Activated CD4-positive, alpha-beta T cell treated with anti-CD3 and anti-CD28 coated beads for 36 hours (primary cell): ENCODE measurements at regions of chr1 and their contacts with region 1.

Region 1: DNA sequence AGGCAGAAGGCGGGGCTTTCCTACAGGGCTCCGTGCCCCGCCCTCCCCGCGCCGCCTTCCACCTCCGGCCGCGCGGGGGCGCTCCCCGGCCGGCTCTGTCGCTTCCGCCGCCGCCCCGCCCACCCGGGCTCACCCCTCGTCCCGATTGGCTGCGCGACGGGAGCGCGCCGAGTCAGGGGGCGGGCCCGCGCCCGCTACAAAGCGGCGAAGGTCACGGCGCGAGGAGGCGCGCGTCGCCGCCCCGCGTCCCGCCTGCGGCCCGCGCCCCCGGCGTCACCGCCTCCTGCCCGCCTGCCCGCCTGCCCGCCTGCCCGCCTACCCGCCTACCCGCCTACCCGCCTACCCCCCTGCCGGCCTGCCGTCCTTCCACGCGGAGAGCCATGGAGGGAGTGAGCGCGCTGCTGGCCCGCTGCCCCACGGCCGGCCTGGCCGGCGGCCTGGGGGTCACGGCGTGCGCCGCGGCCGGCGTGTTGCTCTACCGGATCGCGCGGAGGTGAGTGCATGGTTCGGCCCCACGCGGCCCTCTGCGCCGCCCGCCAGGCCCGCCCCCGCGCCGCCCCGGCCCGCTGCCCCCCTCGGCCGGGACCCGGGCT is at the start of gene TMEM201:
- DNase-seq: peak; percentile 97
- ATAC-seq: peak; percentile 92
- H3K4me3 Mint-ChIP-seq: peak within 1 kb of the TSS; percentile 80
- H3K27ac Mint-ChIP-seq: peak within 1 kb of the TSS; percentile 79
- H3K4me1 Mint-ChIP-seq: peaks cover 26% of the 10 kb centered on the region
- H3K27me3 Mint-ChIP-seq: no peaks in the 10 kb centered on the region
- total RNA-seq, gene TMEM201: 14.6 to 15.1 TPM

Region 2: GRCh38 chr1:8540261-8540941 is 1048.2 kb before region 1 on chr1:
- CTCF ChIA-PET with region 1: no interaction called
- POLR2A ChIA-PET with region 1: no interaction called
- intact Hi-C with region 1: no loop called
- DNase-seq: no peak
- ATAC-seq: peak; percentile 84
- H3K4me3 Mint-ChIP-seq: no peak overlapping the region
- H3K27ac Mint-ChIP-seq: peak overlapping the region; percentile 80
- H3K4me1 Mint-ChIP-seq: peaks cover 32% of the 10 kb centered on the region
- H3K27me3 Mint-ChIP-seq: no peaks in the 10 kb centered on the region

Region 3: DNA sequence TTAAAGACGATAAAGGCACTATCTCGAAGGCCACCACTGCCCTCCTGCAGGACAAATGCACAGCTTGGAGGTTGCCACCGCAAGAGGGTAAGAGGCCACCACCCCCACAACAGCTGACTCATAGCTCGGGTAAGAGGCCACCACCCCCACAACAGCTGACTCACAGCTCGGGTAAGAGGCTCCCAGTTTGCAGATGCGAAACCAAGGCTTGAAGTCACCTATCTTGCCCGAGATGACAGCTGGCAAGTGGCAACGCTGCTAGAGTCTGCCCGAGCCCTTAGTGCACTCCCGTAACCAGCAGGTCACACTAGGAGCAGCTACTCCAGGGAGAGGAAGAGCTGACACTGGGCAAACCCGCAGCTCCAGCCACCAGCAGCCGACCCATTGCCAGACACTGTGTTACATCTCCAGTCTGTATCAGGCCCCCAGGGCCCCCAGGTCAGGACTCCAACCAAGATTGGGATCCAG is 313.0 kb before region 1 on chr1:
- CTCF ChIA-PET with region 1: no interaction called
- POLR2A ChIA-PET with region 1: no interaction called
- intact Hi-C with region 1: loop called in 1 of 2 experiments (anchors 5 kb)
- DNase-seq: peak; percentile 93
- ATAC-seq: peak; percentile 89
- H3K4me3 Mint-ChIP-seq: peak overlapping the region; percentile 2
- H3K27ac Mint-ChIP-seq: peak overlapping the region; percentile 47
- H3K4me1 Mint-ChIP-seq: peaks cover 33% of the 10 kb centered on the region
- H3K27me3 Mint-ChIP-seq: no peaks in the 10 kb centered on the region

Region 4: DNA sequence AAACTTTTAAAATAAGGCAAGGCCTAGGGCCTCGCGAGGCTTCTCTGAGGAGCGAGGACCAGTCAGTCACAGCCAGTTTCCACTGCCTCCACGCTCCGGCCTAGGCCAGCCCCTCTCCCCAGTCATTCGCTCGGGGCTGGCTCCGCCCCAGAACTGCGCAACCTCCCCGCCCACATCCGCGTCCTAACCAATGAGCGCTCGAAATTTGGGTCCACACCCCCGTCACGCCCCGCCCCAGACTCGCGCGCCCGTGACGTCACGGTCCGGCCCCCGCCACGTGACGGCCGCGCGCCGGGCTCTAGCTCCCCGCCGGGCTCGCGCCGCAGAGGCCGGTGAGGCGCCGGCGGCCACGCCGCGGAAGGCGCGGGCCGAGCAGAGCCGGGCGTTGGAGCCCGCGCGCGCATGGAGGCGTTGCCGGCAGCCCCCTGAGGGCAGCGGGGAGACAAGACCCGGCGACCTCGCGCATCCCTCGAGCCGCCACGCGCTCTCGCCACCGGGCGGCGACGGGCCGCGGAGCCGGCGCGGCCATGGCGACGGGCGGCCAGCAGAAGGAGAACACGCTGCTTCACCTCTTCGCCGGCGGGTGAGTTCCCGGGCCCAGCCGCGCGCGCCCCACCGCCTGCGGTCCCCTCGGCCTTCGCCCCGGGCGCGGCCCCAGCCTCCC is 49.4 kb before region 1 on chr1 and contains the start of gene SLC25A33:
- CTCF ChIA-PET with region 1: no interaction called
- POLR2A ChIA-PET with region 1: interaction called, 3 read pairs
- intact Hi-C with region 1: loop called (anchors 1 to 5 kb)
- DNase-seq: peak; percentile 99
- ATAC-seq: peak; percentile 99
- H3K4me3 Mint-ChIP-seq: peak within 1 kb of the TSS; percentile 80
- H3K27ac Mint-ChIP-seq: peak within 1 kb of the TSS; percentile 78
- H3K4me1 Mint-ChIP-seq: peaks cover 30% of the 10 kb centered on the region
- H3K27me3 Mint-ChIP-seq: no peaks in the 10 kb centered on the region
- total RNA-seq, gene SLC25A33: 4.4 to 6.1 TPM

Region 5: GRCh38 chr1:9629445-9630201 is 41.0 kb after region 1 on chr1:
- CTCF ChIA-PET with region 1: interaction called, 4 read pairs
- POLR2A ChIA-PET with region 1: interaction called, 6 read pairs
- intact Hi-C with region 1: loop called in 1 of 2 experiments (anchors 1 kb)
- DNase-seq: peak; percentile 88
- ATAC-seq: peak; percentile 45
- H3K4me3 Mint-ChIP-seq: peak overlapping the region; percentile 87
- H3K27ac Mint-ChIP-seq: peak overlapping the region; percentile 95
- H3K4me1 Mint-ChIP-seq: peaks cover 64% of the 10 kb centered on the region
- H3K27me3 Mint-ChIP-seq: peaks cover 2% of the 10 kb centered on the region

Region 6: GRCh38 chr1:9710037-9710436 is 121.4 kb after region 1 on chr1:
- CTCF ChIA-PET with region 1: no interaction called
- POLR2A ChIA-PET with region 1: no interaction called
- intact Hi-C with region 1: no loop called
- DNase-seq: no peak
- ATAC-seq: no peak
- H3K4me3 Mint-ChIP-seq: no peak overlapping the region
- H3K27ac Mint-ChIP-seq: no peak overlapping the region
- H3K4me1 Mint-ChIP-seq: peaks cover 36% of the 10 kb centered on the region
- H3K27me3 Mint-ChIP-seq: no peaks in the 10 kb centered on the region

Region 7: DNA sequence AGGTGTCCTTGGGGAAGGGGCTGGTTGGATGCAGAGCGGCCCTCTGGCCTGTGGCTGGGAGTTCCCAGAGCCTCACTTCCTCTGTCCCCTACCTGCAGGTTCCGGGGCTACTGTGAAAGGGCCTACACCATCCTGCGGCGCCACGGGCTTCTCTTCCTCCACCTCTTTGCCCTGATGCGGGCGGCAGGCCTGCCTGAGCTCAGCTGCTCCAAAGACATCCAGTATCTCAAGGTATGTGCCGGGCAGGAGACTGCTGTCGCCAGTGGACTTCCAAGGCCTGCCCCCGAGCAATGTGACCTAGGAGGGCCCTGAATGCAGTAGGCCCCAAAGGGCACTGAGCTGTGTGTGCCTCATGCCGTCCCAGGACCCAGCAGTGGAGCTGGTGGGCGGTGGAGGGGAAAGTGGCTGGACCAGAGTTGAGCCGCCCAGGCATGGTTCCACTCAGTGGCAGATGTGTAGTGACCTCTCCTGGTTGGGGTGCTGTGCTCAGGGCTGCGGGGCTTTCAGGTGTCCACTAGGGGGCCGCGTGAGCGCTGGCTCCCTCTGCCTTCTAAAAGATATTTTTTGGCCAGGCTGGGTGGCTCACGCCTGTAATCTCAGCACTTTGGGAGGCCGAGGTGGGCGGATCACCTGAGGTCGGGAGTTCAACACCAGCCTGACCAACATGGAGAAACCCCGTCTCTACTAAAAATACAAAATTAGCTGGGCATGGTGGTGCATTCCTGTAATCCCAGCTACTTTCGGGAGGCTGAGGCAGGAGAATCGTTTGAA is 136.2 kb after region 1 on chr1:
- CTCF ChIA-PET with region 1: no interaction called
- POLR2A ChIA-PET with region 1: no interaction called
- intact Hi-C with region 1: loop called in 1 of 2 experiments (anchors 1 kb)
- DNase-seq: peak; percentile 84
- ATAC-seq: peak; percentile 24
- H3K4me3 Mint-ChIP-seq: no peak overlapping the region
- H3K27ac Mint-ChIP-seq: no peak overlapping the region
- H3K4me1 Mint-ChIP-seq: peaks cover 61% of the 10 kb centered on the region
- H3K27me3 Mint-ChIP-seq: no peaks in the 10 kb centered on the region

Region 8: DNA sequence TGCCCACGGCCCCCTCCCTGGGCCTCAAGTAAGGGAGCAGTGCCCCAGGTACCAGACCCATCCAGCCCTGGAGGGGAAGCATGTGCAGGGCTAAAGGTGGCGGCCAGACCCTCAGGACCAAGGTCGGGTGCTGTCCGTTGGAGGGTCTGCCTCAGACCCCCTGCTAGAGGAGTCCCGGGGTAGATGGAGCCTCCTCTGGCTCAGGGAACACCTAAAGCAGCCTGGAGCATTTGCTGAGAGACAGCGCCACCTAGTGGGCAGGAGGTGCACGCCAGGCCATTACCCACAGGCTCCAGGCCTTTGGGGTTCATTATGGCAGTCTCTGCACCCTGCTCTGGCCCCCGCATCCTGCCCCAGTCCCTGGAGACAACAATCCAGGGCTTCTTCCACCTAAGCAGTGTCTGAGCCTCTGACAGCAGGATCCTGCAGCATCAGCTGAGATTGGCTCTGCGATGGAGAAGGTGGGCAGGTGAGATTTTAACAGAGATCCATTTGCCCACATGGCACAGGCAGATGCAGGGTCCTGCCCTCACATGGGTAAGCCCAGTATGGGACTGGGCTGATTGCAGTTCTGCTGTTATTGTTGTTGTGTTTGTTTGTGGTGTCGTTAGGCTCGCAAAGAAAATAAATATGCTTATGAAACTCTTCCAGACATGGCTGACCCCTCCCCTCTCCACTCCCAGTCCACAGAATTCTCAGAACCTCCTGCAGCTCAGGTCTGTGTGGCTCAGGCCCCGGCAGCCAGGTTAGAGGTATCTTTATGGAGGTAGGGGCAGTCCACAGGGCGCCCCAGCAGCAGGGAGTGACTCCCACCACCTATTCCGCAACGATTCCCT is 279.0 kb after region 1 on chr1:
- CTCF ChIA-PET with region 1: interaction called, 4 read pairs
- POLR2A ChIA-PET with region 1: no interaction called
- intact Hi-C with region 1: loop called in 1 of 2 experiments (anchors 1 kb)
- DNase-seq: peak; percentile 93
- ATAC-seq: peak; percentile 99
- H3K4me3 Mint-ChIP-seq: no peak overlapping the region
- H3K27ac Mint-ChIP-seq: no peak overlapping the region
- H3K4me1 Mint-ChIP-seq: no peaks in the 10 kb centered on the region
- H3K27me3 Mint-ChIP-seq: no peaks in the 10 kb centered on the region